ENCODE measurements at regions of chrX and their contacts with region 1.

Region 1: GRCh38 chrX:18425199-18426003 is at the start of gene CDKL5:
- DNase-seq: peak; percentile 92
- ATAC-seq: peak; percentile 91
- H3K4me3 ChIP-seq: peak within 1 kb of the TSS; percentile 74 to 80 (median 78)
- H3K27ac ChIP-seq: peak within 1 kb of the TSS; percentile 68
- H3K4me1 ChIP-seq: peaks cover 18% of the 10 kb centered on the region; the same call in 1 of the 2 replicates
- H3K27me3 ChIP-seq: no peaks in the 10 kb centered on the region; a peak in 1 of 5 replicates
- CTCF ChIP-seq: no peak
- EP300 ChIP-seq: no peak
- POLR2A ChIP-seq: peak; percentile 47 to 70; a peak in 3 of 4 replicates
- RAD21 ChIP-seq: no peak
- total RNA-seq, gene CDKL5: 7.0 and 9.2 TPM in 2 replicates

Region 2: DNA sequence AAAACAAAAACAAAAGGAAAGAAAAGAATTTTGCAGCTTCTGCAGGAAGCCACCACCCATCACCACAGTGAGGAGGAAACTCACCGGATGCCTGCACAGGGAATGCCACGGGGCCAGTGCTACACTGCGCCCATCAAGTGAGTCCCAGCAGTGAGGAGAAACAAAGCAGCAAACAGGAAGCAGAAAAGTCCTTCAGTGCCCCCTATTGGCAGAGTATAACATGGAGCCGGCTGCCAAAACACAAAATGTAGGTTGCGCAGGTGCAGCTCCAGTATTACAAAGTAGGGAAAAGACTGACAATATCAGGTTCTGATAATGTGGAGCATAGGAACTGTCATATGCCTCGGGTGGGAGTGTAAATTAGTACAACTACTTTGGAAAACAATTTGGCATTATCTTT is 47.6 kb before region 1 on chrX:
- CTCF ChIA-PET with region 1: no interaction called
- POLR2A ChIA-PET with region 1: no interaction called
- in situ Hi-C with region 1: no loop called
- intact Hi-C with region 1: no loop called
- DNase-seq: peak; percentile 11
- ATAC-seq: peak; percentile 83
- H3K4me3 ChIP-seq: no peak overlapping the region
- H3K27ac ChIP-seq: no peak overlapping the region
- H3K4me1 ChIP-seq: no peaks in the 10 kb centered on the region
- H3K27me3 ChIP-seq: no peaks in the 10 kb centered on the region
- CTCF ChIP-seq: peak; percentile 75
- EP300 ChIP-seq: no peak
- POLR2A ChIP-seq: no peak
- RAD21 ChIP-seq: 0 out of 2 replicates have a peak, but pooled peaks have one; percentile 13

Region 3: DNA sequence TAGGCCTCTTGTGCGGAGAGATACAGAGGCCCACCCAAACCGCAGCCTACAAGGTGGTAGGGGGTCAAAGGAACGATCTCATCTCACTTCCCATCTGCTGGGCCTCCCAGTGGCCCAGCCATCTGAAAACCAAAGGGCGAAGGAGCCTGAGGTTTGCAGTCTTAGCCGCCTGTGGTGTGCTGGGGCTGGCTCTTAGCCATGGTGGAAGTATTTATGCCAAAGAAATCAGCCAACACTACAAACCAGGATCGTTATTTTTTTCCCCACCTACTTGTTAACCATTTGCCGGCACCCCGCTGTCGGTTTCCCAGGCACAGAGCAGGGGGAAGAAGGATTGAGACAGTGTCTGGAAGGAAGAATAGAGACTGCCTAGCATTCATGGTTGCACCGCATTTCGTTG is 30.9 kb before region 1 on chrX:
- CTCF ChIA-PET with region 1: no interaction called
- POLR2A ChIA-PET with region 1: no interaction called
- in situ Hi-C with region 1: no loop called
- intact Hi-C with region 1: no loop called
- DNase-seq: no peak
- ATAC-seq: no peak
- H3K4me3 ChIP-seq: no peak overlapping the region
- H3K27ac ChIP-seq: no peak overlapping the region
- H3K4me1 ChIP-seq: peaks cover 21% of the 10 kb centered on the region
- H3K27me3 ChIP-seq: no peaks in the 10 kb centered on the region
- CTCF ChIP-seq: no peak
- EP300 ChIP-seq: no peak
- POLR2A ChIP-seq: no peak
- RAD21 ChIP-seq: no peak

Region 4: GRCh38 chrX:18490806-18491555 is 65.6 kb after region 1 on chrX:
- CTCF ChIA-PET with region 1: no interaction called
- POLR2A ChIA-PET with region 1: no interaction called
- in situ Hi-C with region 1: no loop called
- intact Hi-C with region 1: loop called (anchors 10 kb)
- DNase-seq: no peak
- ATAC-seq: no peak
- H3K4me3 ChIP-seq: no peak overlapping the region
- H3K27ac ChIP-seq: no peak overlapping the region
- H3K4me1 ChIP-seq: no peaks in the 10 kb centered on the region
- H3K27me3 ChIP-seq: no peaks in the 10 kb centered on the region
- CTCF ChIP-seq: no peak
- EP300 ChIP-seq: no peak
- POLR2A ChIP-seq: no peak
- RAD21 ChIP-seq: no peak

Region 5: GRCh38 chrX:18617407-18617750 is 192.0 kb after region 1 on chrX:
- CTCF ChIA-PET with region 1: no interaction called
- POLR2A ChIA-PET with region 1: no interaction called
- in situ Hi-C with region 1: loop called (anchors 25 kb)
- intact Hi-C with region 1: no loop called
- DNase-seq: peak; percentile 82
- ATAC-seq: peak; percentile 72
- H3K4me3 ChIP-seq: no peak overlapping the region
- H3K27ac ChIP-seq: no peak overlapping the region
- H3K4me1 ChIP-seq: peaks cover 35% of the 10 kb centered on the region
- H3K27me3 ChIP-seq: no peaks in the 10 kb centered on the region
- CTCF ChIP-seq: no peak
- EP300 ChIP-seq: no peak
- POLR2A ChIP-seq: no peak
- RAD21 ChIP-seq: no peak